ENCODE measurements at regions of chr13 and their contacts with region 1.

Region 1: GRCh38 chr13:32538621-32539246 is at the start of gene N4BP2L2:
- DNase-seq: peak; percentile 84 to 97
- H3K4me3 ChIP-seq: peak within 1 kb of the TSS; percentile 76 to 83
- H3K27ac ChIP-seq: peak within 1 kb of the TSS; percentile 81 to 93
- H3K4me1 ChIP-seq: peaks cover 3 to 18% of the 10 kb centered on the region in 2 donors
- H3K27me3 ChIP-seq: no peaks in the 10 kb centered on the region
- CTCF ChIP-seq: peak; percentile 9 to 37 (median 27)
- total RNA-seq, gene N4BP2L2: 137 TPM

Region 2: GRCh38 chr13:31909864-31910551 is 628.7 kb before region 1 on chr13:
- intact Hi-C with region 1: loop called (anchors 5 kb)
- DNase-seq: no peak
- H3K4me3 ChIP-seq: no peak overlapping the region
- H3K27ac ChIP-seq: no peak overlapping the region
- H3K4me1 ChIP-seq: peaks cover 0 to 6% of the 10 kb centered on the region in 2 donors
- H3K27me3 ChIP-seq: no peaks in the 10 kb centered on the region
- CTCF ChIP-seq: peak; percentile 66 to 85 (median 81)

Region 3: DNA sequence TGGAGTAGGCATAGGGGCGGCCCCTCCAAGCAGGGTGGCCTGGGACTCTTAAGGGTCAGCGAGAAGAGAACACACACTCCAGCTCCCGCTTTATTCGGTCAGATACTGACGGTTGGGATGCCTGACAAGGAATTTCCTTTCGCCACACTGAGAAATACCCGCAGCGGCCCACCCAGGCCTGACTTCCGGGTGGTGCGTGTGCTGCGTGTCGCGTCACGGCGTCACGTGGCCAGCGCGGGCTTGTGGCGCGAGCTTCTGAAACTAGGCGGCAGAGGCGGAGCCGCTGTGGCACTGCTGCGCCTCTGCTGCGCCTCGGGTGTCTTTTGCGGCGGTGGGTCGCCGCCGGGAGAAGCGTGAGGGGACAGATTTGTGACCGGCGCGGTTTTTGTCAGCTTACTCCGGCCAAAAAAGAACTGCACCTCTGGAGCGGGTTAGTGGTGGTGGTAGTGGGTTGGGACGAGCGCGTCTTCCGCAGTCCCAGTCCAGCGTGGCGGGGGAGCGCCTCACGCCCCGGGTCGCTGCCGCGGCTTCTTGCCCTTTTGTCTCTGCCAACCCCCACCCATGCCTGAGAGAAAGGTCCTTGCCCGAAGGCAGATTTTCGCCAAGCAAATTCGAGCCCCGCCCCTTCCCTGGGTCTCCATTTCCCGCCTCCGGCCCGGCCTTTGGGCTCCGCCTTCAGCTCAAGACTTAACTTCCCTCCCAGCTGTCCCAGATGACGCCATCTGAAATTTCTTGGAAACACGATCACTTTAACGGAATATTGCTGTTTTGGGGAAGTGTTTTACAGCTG is 223.3 kb before region 1 on chr13 and contains the starts of genes BRCA2 and ZAR1L:
- intact Hi-C with region 1: loop called (anchors 5 kb)
- DNase-seq: peak; percentile 54 to 95
- H3K4me3 ChIP-seq: peak within 1 kb of the TSS; percentile 61 to 78
- H3K27ac ChIP-seq: peak within 1 kb of the TSS; percentile 94 to 98
- H3K4me1 ChIP-seq: peaks cover 0 to 2% of the 10 kb centered on the region in 2 donors
- H3K27me3 ChIP-seq: no peaks in the 10 kb centered on the region
- CTCF ChIP-seq: no peak
- total RNA-seq, gene BRCA2: 0.64 TPM
- total RNA-seq, gene ZAR1L: not detected

Region 4: DNA sequence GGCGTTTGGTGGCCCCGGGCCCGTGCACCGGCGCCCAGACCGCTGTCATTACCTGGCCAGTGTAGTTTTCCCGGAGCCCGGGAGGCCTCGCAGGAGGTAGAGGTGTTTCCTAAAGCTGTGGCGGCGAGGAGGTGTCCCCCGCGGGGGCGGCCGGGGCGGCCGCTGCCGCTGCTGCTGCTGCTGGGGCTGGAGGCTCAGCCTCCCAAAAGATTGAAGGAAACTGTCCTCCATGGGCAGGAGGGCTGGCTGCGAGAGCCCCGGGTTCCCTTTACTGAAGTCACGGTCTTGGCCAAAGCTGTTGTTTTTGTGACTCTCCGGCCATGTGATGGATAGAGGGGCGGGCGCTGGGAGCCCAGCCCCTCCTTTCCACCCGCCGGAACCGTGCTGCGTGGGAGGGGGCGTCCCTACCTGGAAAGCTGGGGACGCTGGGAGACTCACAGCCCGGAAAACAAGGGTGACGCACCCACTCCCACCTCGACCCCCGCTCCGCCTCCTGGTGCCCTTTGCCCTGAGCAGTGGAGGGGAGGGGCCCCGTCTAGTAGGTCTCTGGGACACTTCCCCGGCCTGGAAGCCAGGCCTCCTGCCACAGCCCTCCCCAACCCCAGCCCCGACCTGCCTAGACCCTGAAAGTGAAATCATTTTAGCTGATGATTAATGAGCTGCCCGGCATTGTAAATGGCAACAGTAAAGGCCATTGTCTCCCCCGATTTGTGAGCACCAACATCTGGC is 110.7 kb before region 1 on chr13 and contains the start of gene N4BP2L1:
- intact Hi-C with region 1: loop called (anchors 2 kb)
- DNase-seq: peak; percentile 76 to 92
- H3K4me3 ChIP-seq: peak within 1 kb of the TSS; percentile 86 to 99
- H3K27ac ChIP-seq: peak within 1 kb of the TSS; percentile 90 to 99
- H3K4me1 ChIP-seq: peaks cover 0 to 18% of the 10 kb centered on the region in 2 donors
- H3K27me3 ChIP-seq: no peaks in the 10 kb centered on the region
- CTCF ChIP-seq: no peak
- total RNA-seq, gene N4BP2L1: 27.2 TPM

Region 5: DNA sequence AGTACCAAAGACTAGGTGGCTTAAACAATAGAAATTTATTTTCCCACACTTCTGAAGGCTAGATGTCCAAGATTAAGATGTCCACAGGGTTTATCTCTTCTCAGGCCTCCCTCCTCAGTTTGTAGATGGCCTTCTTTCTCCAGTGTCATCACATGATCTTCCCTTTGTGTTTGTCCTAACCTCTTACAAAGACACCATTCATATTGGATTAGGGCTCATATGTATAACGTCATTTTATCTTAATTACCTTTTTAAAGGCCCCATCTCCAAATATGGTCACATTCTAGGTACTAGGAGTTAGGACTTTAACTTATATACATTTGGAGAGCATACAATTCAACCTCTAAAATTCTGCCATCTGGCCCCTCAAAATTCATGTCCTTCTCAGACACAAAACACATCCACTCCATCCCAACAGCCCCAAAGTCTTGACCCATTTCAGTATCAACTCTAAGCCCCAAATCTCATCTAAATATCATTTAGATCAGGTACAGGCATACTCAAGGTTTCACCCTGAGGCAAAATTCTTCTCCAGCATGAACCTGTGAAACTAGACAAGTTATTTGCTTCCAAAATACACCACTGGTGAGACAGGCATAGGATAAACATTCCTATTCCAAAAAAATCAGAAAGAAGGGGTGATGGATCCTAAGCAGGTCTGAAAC is 34.3 kb before region 1 on chr13:
- intact Hi-C with region 1: no loop called
- DNase-seq: no peak
- H3K4me3 ChIP-seq: no peak overlapping the region
- H3K27ac ChIP-seq: no peak overlapping the region
- H3K4me1 ChIP-seq: no peaks in the 10 kb centered on the region
- H3K27me3 ChIP-seq: no peaks in the 10 kb centered on the region
- CTCF ChIP-seq: no peak

Region 6: DNA sequence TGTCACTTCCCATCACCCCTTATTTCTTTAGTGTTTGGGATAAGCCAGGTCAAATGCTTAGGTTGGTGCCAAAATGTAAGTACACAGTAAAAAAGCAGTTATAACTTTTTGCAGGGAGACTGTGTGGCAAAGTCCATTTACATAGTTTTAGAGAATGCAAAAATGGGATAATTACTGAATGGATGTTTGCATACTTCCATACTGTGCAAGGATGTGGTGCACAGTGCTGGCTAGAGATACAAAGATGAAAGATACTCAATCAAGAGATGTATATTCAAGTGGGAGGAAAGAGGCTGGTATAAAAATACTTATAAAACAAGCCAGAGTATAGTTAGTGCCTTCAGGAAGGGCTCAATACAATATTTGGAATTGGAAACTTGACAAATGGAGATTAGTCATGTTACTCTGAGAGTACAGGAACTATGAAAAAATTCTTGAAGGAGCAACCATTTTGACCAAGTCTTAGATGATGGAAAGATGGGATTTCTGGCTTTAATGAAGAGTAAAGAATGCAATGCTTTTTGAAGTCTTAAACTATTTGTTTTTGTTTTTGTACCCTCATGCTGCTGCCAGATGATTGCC is 55.5 kb after region 1 on chr13:
- intact Hi-C with region 1: no loop called
- DNase-seq: no peak
- H3K4me3 ChIP-seq: no peak overlapping the region
- H3K27ac ChIP-seq: no peak overlapping the region
- H3K4me1 ChIP-seq: peaks cover 0 to 14% of the 10 kb centered on the region in 2 donors
- H3K27me3 ChIP-seq: no peaks in the 10 kb centered on the region
- CTCF ChIP-seq: no peak

Measured in ascending aorta (tissue), 2 donors.